Dendritic cell treated with granulocyte-macrophage colony-stimulating factor and Interleukin-4, amounts not matched to agents 40 ng/mL and 50 ng/mL, for 4 days (primary cell): ENCODE measurements at regions of chr3 and their contacts with region 1.

Region 1: GRCh38 chr3:50192689-50193141 is 1.3 kb downstream of the GNAT1 start:
- H3K4me3 Mint-ChIP-seq: no peak overlapping the region
- H3K27ac Mint-ChIP-seq: no peak overlapping the region
- H3K4me1 Mint-ChIP-seq: peaks cover 22% of the 10 kb centered on the region
- H3K27me3 Mint-ChIP-seq: peaks cover 46% of the 10 kb centered on the region

Region 2: GRCh38 chr3:50121416-50122032 is 71.2 kb before region 1 on chr3:
- intact Hi-C with region 1: loop called (anchors 1 kb)
- H3K4me3 Mint-ChIP-seq: no peak overlapping the region
- H3K27ac Mint-ChIP-seq: no peak overlapping the region
- H3K4me1 Mint-ChIP-seq: peaks cover 5% of the 10 kb centered on the region
- H3K27me3 Mint-ChIP-seq: no peaks in the 10 kb centered on the region

Region 3: GRCh38 chr3:50298836-50299637 is 106.3 kb after region 1 on chr3 and contains the starts of genes HYAL3 and NAA80:
- intact Hi-C with region 1: no loop called
- H3K4me3 Mint-ChIP-seq: peak within 1 kb of the TSS; percentile 86
- H3K27ac Mint-ChIP-seq: peak within 1 kb of the TSS; percentile 96
- H3K4me1 Mint-ChIP-seq: peaks cover 41% of the 10 kb centered on the region
- H3K27me3 Mint-ChIP-seq: no peaks in the 10 kb centered on the region